ENCODE measurements at regions of chrX and their contacts with region 1.

Region 1: DNA sequence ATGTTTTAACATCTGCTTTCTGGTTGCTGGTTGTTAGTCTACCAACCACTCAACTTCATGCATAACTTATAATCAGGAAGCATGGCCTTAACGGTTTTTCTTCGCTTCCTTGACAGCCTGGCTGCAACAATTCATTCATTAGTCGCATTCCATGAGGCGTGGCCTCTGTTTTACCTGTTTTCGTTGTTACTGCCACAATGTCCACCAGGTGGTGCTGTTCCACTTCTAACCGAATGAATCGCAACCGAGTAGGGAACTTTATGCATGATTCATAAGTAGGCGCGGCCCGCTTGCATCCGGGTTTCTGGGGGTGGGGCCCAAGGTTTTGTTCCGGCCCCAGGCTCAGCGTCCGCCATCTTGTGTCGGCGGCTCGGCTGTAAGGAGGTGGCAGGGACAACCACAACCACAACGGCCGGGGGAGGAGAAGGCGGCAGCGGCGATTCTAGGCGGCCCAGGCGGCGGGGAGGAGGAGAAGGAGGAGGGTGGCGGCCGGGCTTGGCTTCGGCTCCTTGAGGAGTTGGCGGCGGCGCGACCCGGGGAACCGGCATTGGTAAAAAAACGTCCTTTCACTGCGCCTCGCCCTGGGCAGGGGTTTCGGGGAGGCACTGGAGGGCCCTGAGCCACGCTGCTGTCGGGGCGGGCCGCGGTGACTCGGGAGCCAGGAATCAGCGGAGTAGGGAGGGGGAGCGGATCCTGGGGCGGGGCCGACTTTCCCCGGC is at the start of gene UBA1:
- DNase-seq: peak; percentile 84 to 97 (median 95)
- H3K4me3 ChIP-seq: peak within 1 kb of the TSS; percentile 74
- H3K4me3 Mint-ChIP-seq: peak within 1 kb of the TSS; percentile 91 to 100 (median 98)
- H3K27ac ChIP-seq: peak within 1 kb of the TSS; percentile 84
- H3K27ac Mint-ChIP-seq: peak within 1 kb of the TSS; percentile 88 to 100 (median 99)
- H3K4me1 ChIP-seq: peaks cover 46% of the 10 kb centered on the region
- H3K4me1 Mint-ChIP-seq: peaks cover 62 to 77% (median 65%) of the 10 kb centered on the region in 3 donors
- H3K27me3 ChIP-seq: no peaks in the 10 kb centered on the region
- H3K27me3 Mint-ChIP-seq: no peaks in the 10 kb centered on the region
- total RNA-seq, gene UBA1: 225 to 234 TPM

Region 2: GRCh38 chrX:47206316-47206715 is 12.7 kb after region 1 on chrX:
- CTCF ChIA-PET with region 1: no interaction called
- POLR2A ChIA-PET with region 1: no interaction called
- DNase-seq: no peak
- H3K4me3 ChIP-seq: no peak overlapping the region
- H3K4me3 Mint-ChIP-seq: no peak overlapping the region
- H3K27ac ChIP-seq: no peak overlapping the region
- H3K27ac Mint-ChIP-seq: peak overlapping the region in 2 of 8 donors; percentile 45 to 77
- H3K4me1 ChIP-seq: no peaks in the 10 kb centered on the region
- H3K4me1 Mint-ChIP-seq: peaks cover 0 to 8% (median 0%) of the 10 kb centered on the region in 3 donors
- H3K27me3 ChIP-seq: no peaks in the 10 kb centered on the region
- H3K27me3 Mint-ChIP-seq: no peaks in the 10 kb centered on the region

Region 3: GRCh38 chrX:47384502-47384901 is 190.9 kb after region 1 on chrX:
- CTCF ChIA-PET with region 1: interaction called, 16 read pairs
- POLR2A ChIA-PET with region 1: interaction called, 3 read pairs
- DNase-seq: peak; percentile 51 to 79 (median 63)
- H3K4me3 ChIP-seq: no peak overlapping the region
- H3K4me3 Mint-ChIP-seq: no peak overlapping the region
- H3K27ac ChIP-seq: no peak overlapping the region
- H3K27ac Mint-ChIP-seq: peak overlapping the region in 2 of 8 donors; percentile 43 to 54
- H3K4me1 ChIP-seq: peaks cover 6% of the 10 kb centered on the region
- H3K4me1 Mint-ChIP-seq: peaks cover 13 to 27% (median 27%) of the 10 kb centered on the region in 3 donors
- H3K27me3 ChIP-seq: no peaks in the 10 kb centered on the region
- H3K27me3 Mint-ChIP-seq: peaks cover 0 to 3% of the 10 kb centered on the region in 2 donors

Measured in CD8-positive, alpha-beta memory T cell (primary cell).